Aorta (tissue), 5 donors: ENCODE measurements at regions of chr5 and their contacts with region 1.

Region 1: DNA sequence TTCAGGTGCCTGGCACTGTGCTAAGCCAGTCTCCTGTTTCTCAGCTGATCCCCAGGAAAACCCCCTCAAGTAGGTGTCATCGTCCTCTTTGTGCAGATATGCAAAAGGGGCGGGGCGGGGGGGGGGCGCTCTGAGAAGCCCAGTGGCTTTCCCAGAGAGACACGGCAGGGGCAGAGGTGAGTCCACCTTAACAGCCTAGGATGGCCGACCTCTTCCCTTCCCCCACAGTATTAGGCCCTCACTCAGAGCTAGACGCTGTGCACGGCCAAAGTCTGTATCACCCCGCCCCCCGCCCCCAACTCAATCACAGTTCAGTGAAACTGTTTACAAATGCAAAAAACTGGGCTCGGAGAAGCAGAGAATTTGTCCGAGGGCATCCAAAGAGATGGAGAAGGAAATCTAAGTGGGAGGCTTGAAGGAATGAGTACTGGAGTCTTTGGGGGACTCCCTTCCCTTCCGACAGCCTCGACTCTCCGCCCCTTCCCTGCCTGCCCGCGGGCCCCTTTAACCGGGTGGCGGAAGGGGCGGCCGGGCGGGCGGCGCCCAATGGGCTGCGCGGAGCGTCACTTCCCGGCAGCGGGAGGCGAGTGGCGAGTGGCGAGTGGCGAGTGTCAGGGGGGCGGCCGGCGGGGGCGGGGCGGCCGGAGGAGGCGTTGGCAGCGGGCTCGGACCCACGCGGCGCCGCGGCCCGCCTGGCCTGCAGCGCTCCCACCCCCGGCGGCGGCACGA is at the start of gene ERGIC1:
- DNase-seq: peak; percentile 93 to 95
- ATAC-seq: peak; percentile 92
- H3K4me3 ChIP-seq: peak within 1 kb of the TSS; percentile 77 to 98
- H3K27ac ChIP-seq: peak within 1 kb of the TSS; percentile 43 to 96
- H3K4me1 ChIP-seq: peaks cover 0 to 6% of the 10 kb centered on the region in 2 donors
- H3K27me3 ChIP-seq: no peaks in the 10 kb centered on the region
- total RNA-seq, gene ERGIC1: 135 to 170 TPM

Region 2: GRCh38 chr5:172854451-172854871 is 20.6 kb after region 1 on chr5:
- intact Hi-C with region 1: loop called in 1 of 2 experiments (anchors 2 kb)
- DNase-seq: peak; percentile 73 to 86
- ATAC-seq: peak; percentile 49
- H3K4me3 ChIP-seq: no peak overlapping the region
- H3K27ac ChIP-seq: peak overlapping the region; percentile 71 to 73
- H3K4me1 ChIP-seq: no peaks in the 10 kb centered on the region
- H3K27me3 ChIP-seq: no peaks in the 10 kb centered on the region